Mammary epithelial cell (primary cell): ENCODE measurements at regions of chr1 and their contacts with region 1.

Region 1: DNA sequence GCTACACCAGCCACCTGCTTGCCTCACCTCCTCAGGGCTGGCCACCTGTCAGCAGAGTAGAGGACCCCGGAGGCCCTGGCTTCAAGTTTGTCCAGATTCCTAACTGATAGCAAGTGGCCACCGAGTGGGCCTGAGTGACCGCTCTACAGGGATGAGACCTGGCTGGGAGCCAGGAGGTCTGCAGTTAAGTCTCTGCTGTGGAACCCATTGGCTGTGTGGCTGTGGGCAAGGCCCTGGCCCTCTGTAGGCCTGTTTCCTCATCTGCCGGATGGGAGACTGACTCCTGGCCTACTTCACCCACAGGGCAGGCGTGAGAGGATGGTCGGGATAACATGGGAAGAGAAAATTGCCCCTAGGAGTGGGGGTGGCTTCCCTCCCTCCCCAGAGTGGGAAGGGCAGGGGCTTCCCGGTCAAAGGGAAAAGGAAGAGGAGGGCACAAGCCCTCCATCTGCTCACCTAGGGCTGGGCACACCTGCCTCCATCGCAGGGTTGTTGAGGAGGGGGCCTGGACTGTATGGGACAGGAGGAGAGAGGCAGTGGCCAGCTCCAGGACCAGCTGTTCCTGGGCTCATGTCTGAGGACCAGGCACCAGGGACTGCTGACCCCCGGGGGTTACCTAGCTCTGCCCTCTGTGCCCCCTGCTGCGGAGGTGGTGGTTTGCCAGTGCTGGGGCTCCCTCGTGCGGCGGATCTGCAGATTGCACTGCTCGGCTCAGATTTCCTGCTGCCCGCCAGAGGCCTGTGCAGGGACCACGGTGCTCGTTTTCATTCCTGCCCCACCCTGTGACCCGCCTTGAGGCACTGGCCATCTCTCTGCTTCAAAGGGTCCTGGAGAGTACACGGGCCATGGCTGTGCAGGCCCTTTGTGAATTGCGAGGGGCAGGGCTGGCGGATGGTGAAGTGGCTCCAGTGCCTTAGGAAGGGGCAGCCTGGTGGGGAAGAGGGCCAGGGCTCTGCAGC is 9.1 kb upstream of the MTFR1L start:
- DNase-seq: no peak
- H3K4me3 ChIP-seq: no peak overlapping the region
- H3K27ac ChIP-seq: no peak overlapping the region
- H3K4me1 ChIP-seq: peaks cover 4% of the 10 kb centered on the region
- H3K27me3 ChIP-seq: no peaks in the 10 kb centered on the region
- CTCF ChIP-seq: peak; percentile 75 to 89

Region 2: GRCh38 chr1:25442178-25442577 is 368.4 kb before region 1 on chr1:
- CTCF ChIA-PET with region 1: no interaction called
- dilution Hi-C with region 1: no loop called
- in situ Hi-C with region 1: no loop called
- intact Hi-C with region 1: loop called (anchors 5 kb)
- DNase-seq: peak; percentile 40
- H3K4me3 ChIP-seq: no peak overlapping the region
- H3K27ac ChIP-seq: no peak overlapping the region
- H3K4me1 ChIP-seq: peaks cover 3% of the 10 kb centered on the region
- H3K27me3 ChIP-seq: no peaks in the 10 kb centered on the region
- CTCF ChIP-seq: peak in 1 of 2 donors; percentile 10

Region 3: DNA sequence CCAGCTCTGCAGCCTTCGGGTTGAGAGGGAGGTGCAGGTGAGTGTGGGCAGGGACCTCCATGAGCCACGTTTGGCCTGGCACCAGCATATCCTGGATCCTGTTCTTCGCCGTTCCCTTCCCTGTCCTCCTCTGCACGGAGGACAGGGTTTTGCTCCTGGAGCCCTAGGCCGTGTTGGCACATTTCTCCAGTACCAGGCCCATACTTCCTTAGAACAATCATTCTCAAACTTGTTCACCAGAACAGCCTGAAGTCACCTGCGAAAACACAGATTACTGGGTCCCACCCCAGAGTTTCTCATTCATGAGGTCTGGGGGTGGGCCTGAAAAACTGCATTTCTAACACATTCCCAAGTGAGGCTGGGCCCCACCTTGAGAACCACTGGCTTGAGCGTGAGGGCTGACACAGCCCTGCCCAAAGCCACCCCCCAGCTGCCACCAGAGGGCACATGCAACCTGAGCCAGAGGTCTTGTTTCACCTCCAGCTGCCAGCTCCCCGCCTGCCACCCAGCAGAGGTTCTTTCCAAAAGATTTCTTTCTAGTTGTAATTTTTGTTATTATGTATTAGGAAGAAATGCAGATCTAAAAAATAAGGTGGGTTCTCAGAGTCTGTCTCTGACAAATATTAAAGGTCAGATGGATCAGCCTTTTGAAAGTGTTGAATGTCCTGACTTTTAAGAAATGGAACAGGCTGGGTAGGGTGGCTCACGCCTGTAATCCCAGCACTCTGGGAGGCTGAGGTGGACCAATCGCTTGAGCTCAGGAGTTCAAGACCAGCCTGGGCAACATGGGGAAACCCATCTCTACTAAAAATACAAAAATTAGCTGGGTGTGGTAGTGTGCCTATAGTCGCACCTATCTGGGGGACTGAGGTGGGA is 306.8 kb before region 1 on chr1:
- CTCF ChIA-PET with region 1: no interaction called
- dilution Hi-C with region 1: no loop called
- in situ Hi-C with region 1: no loop called
- intact Hi-C with region 1: loop called (anchors 1 kb)
- DNase-seq: peak; percentile 21
- H3K4me3 ChIP-seq: no peak overlapping the region
- H3K27ac ChIP-seq: no peak overlapping the region
- H3K4me1 ChIP-seq: no peaks in the 10 kb centered on the region
- H3K27me3 ChIP-seq: no peaks in the 10 kb centered on the region
- CTCF ChIP-seq: peak; percentile 56 to 75